Ovary (tissue), 10 donors: ENCODE measurements at regions of chr4 and their contacts with region 1.

Region 1: DNA sequence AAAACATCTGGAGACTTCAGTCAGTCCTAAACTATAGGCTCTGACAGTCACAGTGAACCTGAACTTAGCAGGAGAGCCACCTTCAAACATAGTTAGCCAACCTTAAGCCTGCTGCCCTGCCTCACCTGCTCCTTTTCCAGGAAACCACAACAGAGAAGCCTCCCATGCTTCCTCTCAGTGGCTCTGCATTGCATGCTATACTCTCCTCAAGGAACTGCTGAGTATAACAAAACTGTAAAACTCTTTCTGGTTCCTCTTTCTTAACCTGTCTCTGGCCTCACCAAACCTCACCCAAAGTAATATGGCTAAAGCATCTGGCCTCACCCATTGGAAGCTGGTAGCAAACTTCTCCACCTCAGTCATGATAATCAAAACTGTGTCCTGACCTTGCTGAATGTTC is 122.1 kb downstream of the ANKRD50 start:
- DNase-seq: no peak
- H3K4me3 ChIP-seq: no peak overlapping the region
- H3K27ac ChIP-seq: no peak overlapping the region
- H3K4me1 ChIP-seq: no peaks in the 10 kb centered on the region
- H3K27me3 ChIP-seq: no peaks in the 10 kb centered on the region
- CTCF ChIP-seq: no peak
- EP300 ChIP-seq: no peak
- POLR2A ChIP-seq: no peak

Region 2: DNA sequence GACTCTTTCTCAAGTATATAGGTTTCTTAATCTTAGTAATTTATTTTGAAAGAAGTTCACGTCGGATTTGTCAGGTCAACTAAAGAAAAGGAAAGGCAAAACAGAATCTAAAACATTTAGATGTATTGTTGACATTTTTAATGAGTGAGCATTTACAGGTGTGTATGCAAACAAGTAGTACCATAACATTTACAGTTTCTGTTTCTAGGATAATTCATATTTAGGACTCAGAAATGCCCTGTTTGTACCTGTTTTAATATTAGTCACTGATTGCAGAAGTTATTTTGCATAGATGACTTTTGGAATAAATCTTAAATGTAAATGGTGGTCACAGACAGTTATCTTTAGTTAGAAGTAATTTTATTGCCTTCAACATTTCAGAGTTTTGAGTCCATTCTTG is 1516.8 kb before region 1 on chr4:
- intact Hi-C with region 1: no loop called
- DNase-seq: no peak
- H3K4me3 ChIP-seq: no peak overlapping the region
- H3K27ac ChIP-seq: no peak overlapping the region
- H3K4me1 ChIP-seq: peaks cover 1% of the 10 kb centered on the region
- H3K27me3 ChIP-seq: no peaks in the 10 kb centered on the region
- CTCF ChIP-seq: no peak
- EP300 ChIP-seq: no peak
- POLR2A ChIP-seq: no peak

Region 3: DNA sequence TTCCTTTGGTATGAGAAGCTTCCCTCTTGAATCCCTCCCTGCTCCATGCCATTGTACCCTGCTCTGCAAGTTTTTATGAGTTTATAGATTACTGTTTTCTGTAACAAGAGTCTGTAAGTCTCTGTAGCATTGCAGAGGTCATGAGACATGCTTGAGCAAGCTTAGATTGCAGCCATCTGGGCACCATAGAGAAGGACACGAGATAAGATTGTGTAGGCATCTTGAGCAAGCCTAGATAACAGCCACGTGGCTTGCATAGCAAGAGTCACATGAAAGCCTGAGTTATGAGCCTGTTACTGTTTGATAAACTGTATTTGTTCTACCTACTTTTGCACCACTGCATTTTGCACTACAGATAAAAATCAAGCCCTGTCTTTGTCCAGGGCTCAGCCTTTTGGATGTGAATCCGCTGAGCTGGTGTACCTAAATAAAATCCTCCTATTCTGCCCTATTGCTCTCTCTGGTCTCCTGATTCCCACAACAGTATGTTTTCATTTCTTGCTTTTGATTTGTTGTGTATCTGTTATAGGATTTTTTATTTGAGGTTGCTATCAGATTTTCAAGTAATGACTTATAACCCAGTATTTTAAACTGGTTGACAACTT is 249.4 kb after region 1 on chr4:
- intact Hi-C with region 1: loop called in 1 of 4 experiments (anchors 5 kb)
- DNase-seq: no peak
- H3K4me3 ChIP-seq: no peak overlapping the region
- H3K27ac ChIP-seq: no peak overlapping the region
- H3K4me1 ChIP-seq: no peaks in the 10 kb centered on the region
- H3K27me3 ChIP-seq: no peaks in the 10 kb centered on the region
- CTCF ChIP-seq: no peak
- EP300 ChIP-seq: no peak
- POLR2A ChIP-seq: no peak